ENCODE measurements at regions of chr1 and their contacts with region 1.

Region 1: DNA sequence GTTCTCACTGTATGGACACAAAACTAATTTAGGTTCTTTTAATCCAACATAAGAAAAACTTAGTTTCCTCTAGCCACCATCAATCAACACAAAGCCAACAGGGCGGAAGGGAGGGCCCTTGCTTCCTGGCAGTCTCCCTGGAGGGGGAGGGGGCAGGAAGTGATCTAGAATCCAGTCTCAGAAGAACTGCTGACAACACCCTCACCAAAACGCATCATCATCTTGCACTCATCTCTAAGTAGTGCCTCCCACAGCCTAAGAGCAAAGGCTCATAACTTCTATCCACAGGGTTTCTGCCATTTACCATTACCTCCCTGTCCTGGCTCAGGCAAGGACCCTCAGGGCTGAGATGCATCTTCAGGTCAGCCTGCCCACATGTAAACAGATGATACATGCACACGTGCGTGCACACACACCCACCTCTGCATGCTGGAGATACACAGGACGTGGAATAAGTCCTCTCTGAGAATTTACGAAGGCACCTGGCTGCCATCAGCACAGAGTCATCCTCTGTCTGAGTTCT is 20.5 kb downstream of the HIVEP3 start:
- DNase-seq: peak; percentile 51 to 88
- ATAC-seq: peak; percentile 86 to 92 (median 88)
- H3K4me3 ChIP-seq: no peak overlapping the region
- H3K4me3 Mint-ChIP-seq: peak overlapping the region; percentile 71
- H3K27ac ChIP-seq: peak overlapping the region; percentile 84
- H3K27ac Mint-ChIP-seq: peak overlapping the region; percentile 90 to 93
- H3K4me1 ChIP-seq: peaks cover 91% of the 10 kb centered on the region
- H3K4me1 Mint-ChIP-seq: peaks cover 92 to 93% of the 10 kb centered on the region in 2 donors
- H3K27me3 ChIP-seq: no peaks in the 10 kb centered on the region
- H3K27me3 Mint-ChIP-seq: no peaks in the 10 kb centered on the region
- CTCF ChIP-seq: no peak

Region 2: GRCh38 chr1:41683681-41684500 is 214.4 kb before region 1 on chr1:
- intact Hi-C with region 1: loop called (anchors 5 kb)
- DNase-seq: peak in 1 of 2 donors; percentile 51
- ATAC-seq: peak; percentile 56 to 69 (median 65)
- H3K4me3 ChIP-seq: no peak overlapping the region
- H3K4me3 Mint-ChIP-seq: peak overlapping the region; percentile 78
- H3K27ac ChIP-seq: peak overlapping the region; percentile 42
- H3K27ac Mint-ChIP-seq: peak overlapping the region; percentile 69 to 82
- H3K4me1 ChIP-seq: peaks cover 69% of the 10 kb centered on the region
- H3K4me1 Mint-ChIP-seq: peaks cover 100% of the 10 kb centered on the region in 2 donors
- H3K27me3 ChIP-seq: no peaks in the 10 kb centered on the region
- H3K27me3 Mint-ChIP-seq: no peaks in the 10 kb centered on the region
- CTCF ChIP-seq: no peak

Measured in natural killer cell (primary cell).